H1 (cell line): ENCODE measurements at regions of chr6 and their contacts with region 1.

Region 1: DNA sequence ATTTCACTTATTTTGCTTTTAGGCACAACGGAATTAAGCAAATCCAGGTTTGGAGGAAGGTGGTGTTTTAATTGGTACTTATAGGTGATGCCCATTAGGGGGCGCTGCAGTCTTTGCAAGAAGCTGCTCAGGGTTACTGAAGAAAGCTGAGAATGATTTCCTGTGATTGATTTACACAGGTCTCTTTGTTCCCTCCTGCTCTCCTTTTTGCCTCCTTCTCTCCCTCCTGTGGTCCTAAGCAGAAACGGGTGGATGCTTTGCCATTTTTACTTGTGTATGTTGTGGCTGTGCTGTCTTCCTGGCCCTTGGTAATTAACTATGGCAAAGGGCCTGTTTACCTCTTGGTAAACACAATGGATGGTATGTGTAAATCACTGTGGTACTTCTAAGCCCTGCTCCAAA is 97.8 kb downstream of the ANKS1A start:
- DNase-seq: peak; percentile 25 to 77
- H3K4me3 ChIP-seq: no peak overlapping the region
- H3K27ac ChIP-seq: 0 out of 2 replicates have a peak overlapping the region, but pooled peaks have one; percentile 13
- H3K4me1 ChIP-seq: peaks cover 0 to 6% (median 2%) of the 10 kb centered on the region in 4 experiments; a peak in 4 of 7 replicates
- H3K27me3 ChIP-seq: no peaks in the 10 kb centered on the region
- CTCF ChIP-seq: peak in 2 of 3 experiments; percentile 86; a peak in 3 of 4 replicates
- EP300 ChIP-seq: no peak
- POLR2A ChIP-seq: no peak
- RAD21 ChIP-seq: peak; percentile 94 to 96

Region 2: DNA sequence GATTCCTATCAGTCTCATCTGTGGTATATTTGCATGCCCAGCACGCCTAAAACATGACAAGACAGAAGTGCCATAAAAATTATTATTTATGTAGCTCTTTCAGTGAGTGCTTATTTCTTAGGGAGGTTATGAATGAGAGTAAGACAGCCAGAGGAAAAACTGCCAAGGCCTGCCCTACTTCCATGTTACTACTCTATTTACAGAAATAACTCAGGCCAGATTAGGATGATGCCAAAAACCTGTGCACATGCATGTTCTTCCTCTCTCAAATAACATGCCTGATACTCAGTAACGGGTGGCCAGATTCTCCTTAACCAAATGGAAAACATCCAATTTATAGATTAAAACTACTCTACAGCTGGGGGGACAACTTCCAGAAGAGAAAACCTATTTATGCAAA is 336.0 kb before region 1 on chr6:
- CTCF ChIA-PET with region 1: no interaction called
- POLR2A ChIA-PET with region 1: no interaction called
- DNase-seq: no peak
- H3K4me3 ChIP-seq: no peak overlapping the region
- H3K27ac ChIP-seq: no peak overlapping the region
- H3K4me1 ChIP-seq: no peaks in the 10 kb centered on the region
- H3K27me3 ChIP-seq: no peaks in the 10 kb centered on the region
- CTCF ChIP-seq: no peak
- EP300 ChIP-seq: no peak
- POLR2A ChIP-seq: no peak
- RAD21 ChIP-seq: no peak

Region 3: GRCh38 chr6:34973547-34974248 is 13.1 kb before region 1 on chr6:
- CTCF ChIA-PET with region 1: interaction called, 17 read pairs
- POLR2A ChIA-PET with region 1: no interaction called
- DNase-seq: no peak
- H3K4me3 ChIP-seq: no peak overlapping the region
- H3K27ac ChIP-seq: no peak overlapping the region
- H3K4me1 ChIP-seq: no peaks in the 10 kb centered on the region
- H3K27me3 ChIP-seq: peaks cover 0 to 1% (median 0%) of the 10 kb centered on the region in 4 experiments; a peak in 1 of 7 replicates
- CTCF ChIP-seq: peak in 2 of 3 experiments; percentile 20 to 25; a peak in 2 of 4 replicates
- EP300 ChIP-seq: no peak
- POLR2A ChIP-seq: no peak
- RAD21 ChIP-seq: peak; percentile 25 to 46; a peak in 3 of 4 replicates

Region 4: GRCh38 chr6:35048631-35049083 is 61.8 kb after region 1 on chr6:
- CTCF ChIA-PET with region 1: interaction called, 31 read pairs
- POLR2A ChIA-PET with region 1: no interaction called
- DNase-seq: no peak
- H3K4me3 ChIP-seq: no peak overlapping the region; a peak in 2 of 8 replicates
- H3K27ac ChIP-seq: peak overlapping the region; percentile 96
- H3K4me1 ChIP-seq: peaks cover 21 to 52% (median 39%) of the 10 kb centered on the region in 4 experiments
- H3K27me3 ChIP-seq: no peaks in the 10 kb centered on the region
- CTCF ChIP-seq: peak; percentile 52 to 63 (median 55)
- EP300 ChIP-seq: no peak
- POLR2A ChIP-seq: no peak
- RAD21 ChIP-seq: peak; percentile 43 to 60

Region 5: DNA sequence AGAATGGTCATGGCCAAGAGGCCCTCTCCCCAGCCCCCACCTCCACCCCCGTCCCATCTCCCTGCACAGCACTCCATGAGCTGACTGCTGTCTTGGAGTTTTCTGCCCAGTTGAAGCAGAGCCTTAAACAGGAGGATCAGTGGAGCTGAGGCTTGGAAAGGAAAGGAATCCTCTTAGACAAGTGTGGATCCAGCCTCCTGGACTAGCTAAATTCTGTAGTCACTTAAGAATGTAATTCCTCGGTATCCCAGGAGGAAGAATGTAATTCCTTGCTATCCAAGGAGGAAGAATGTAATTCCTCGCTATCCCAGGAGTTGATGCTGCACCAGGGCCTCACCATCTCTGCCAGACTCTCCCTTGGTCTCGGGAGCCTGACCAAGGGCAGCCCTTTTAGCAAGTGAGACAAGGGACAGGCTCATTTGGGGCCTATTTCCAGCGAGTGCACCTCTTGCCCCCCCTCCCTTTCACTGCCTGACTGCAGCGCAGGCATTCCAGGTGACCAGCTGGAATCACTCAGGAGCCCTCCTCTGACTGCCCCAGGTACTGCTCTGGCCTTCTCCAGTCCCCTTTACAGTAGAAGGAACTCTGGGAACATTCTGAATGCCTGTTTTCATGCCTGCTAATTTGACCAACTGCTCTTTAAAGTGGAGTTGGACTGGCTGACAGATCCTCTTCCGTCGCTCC is 78.1 kb after region 1 on chr6:
- CTCF ChIA-PET with region 1: interaction called, 20 read pairs
- POLR2A ChIA-PET with region 1: no interaction called
- DNase-seq: no peak
- H3K4me3 ChIP-seq: no peak overlapping the region
- H3K27ac ChIP-seq: 0 out of 2 replicates have a peak overlapping the region, but pooled peaks have one; percentile 34
- H3K4me1 ChIP-seq: peaks cover 0 to 16% (median 9%) of the 10 kb centered on the region in 4 experiments; a peak in 6 of 7 replicates
- H3K27me3 ChIP-seq: no peaks in the 10 kb centered on the region
- CTCF ChIP-seq: peak in 2 of 3 experiments; percentile 50 to 56; a peak in 3 of 4 replicates
- EP300 ChIP-seq: no peak
- POLR2A ChIP-seq: no peak
- RAD21 ChIP-seq: peak; percentile 52 to 63

Region 6: GRCh38 chr6:35089935-35090505 is 103.2 kb after region 1 on chr6:
- CTCF ChIA-PET with region 1: interaction called, 13 read pairs
- POLR2A ChIA-PET with region 1: no interaction called
- DNase-seq: peak in 1 of 2 experiments; percentile 42
- H3K4me3 ChIP-seq: no peak overlapping the region
- H3K27ac ChIP-seq: no peak overlapping the region
- H3K4me1 ChIP-seq: peaks cover 0 to 3% (median 0%) of the 10 kb centered on the region in 4 experiments; a peak in 5 of 7 replicates
- H3K27me3 ChIP-seq: no peaks in the 10 kb centered on the region
- CTCF ChIP-seq: no peak
- EP300 ChIP-seq: no peak
- POLR2A ChIP-seq: no peak
- RAD21 ChIP-seq: no peak

Region 7: GRCh38 chr6:35128496-35128895 is 141.7 kb after region 1 on chr6:
- CTCF ChIA-PET with region 1: interaction called, 20 read pairs
- POLR2A ChIA-PET with region 1: no interaction called
- DNase-seq: no peak
- H3K4me3 ChIP-seq: no peak overlapping the region
- H3K27ac ChIP-seq: no peak overlapping the region
- H3K4me1 ChIP-seq: no peaks in the 10 kb centered on the region
- H3K27me3 ChIP-seq: no peaks in the 10 kb centered on the region
- CTCF ChIP-seq: no peak
- EP300 ChIP-seq: no peak
- POLR2A ChIP-seq: no peak
- RAD21 ChIP-seq: no peak

Region 8: GRCh38 chr6:35146453-35146852 is 159.6 kb after region 1 on chr6:
- CTCF ChIA-PET with region 1: interaction called, 89 read pairs
- POLR2A ChIA-PET with region 1: interaction called, 3 read pairs
- DNase-seq: peak in 1 of 2 experiments; percentile 54
- H3K4me3 ChIP-seq: no peak overlapping the region
- H3K27ac ChIP-seq: no peak overlapping the region
- H3K4me1 ChIP-seq: peaks cover 0 to 10% (median 7%) of the 10 kb centered on the region in 4 experiments; a peak in 5 of 7 replicates
- H3K27me3 ChIP-seq: peaks cover 0 to 19% (median 13%) of the 10 kb centered on the region in 4 experiments; a peak in 6 of 7 replicates
- CTCF ChIP-seq: peak; percentile 55 to 63 (median 61)
- EP300 ChIP-seq: no peak
- POLR2A ChIP-seq: no peak
- RAD21 ChIP-seq: peak; percentile 73 to 85